ENCODE measurements at regions of chr5 and their contacts with region 1.

Region 1: DNA sequence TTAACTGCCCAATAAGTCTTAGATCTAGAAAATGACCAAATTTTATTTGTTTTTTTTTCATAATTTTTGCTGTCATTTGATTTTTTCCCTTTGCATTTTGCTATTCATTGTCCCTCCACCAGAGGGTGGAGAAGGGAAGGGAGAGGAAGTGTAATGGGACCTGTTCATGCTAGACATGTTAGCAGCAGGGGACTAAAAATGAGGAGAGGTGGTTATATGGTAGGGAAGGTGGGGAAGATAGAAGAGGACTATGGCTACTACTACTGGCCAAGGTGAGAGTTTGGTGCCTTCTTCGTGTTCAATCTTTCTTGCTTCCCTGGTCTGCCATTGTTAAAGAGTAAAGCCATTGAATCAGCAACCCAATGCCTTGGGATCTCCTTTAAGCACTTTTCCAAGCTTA is 6.4 kb downstream of the GRIA1 start:
- DNase-seq: no peak

Region 2: GRCh38 chr5:152838241-152838786 is 658.5 kb before region 1 on chr5:
- intact Hi-C with region 1: no loop called
- DNase-seq: no peak

Region 3: GRCh38 chr5:153372425-153373129 is 124.3 kb before region 1 on chr5:
- intact Hi-C with region 1: no loop called
- DNase-seq: no peak

Region 4: GRCh38 chr5:153672347-153673090 is 175.7 kb after region 1 on chr5:
- intact Hi-C with region 1: no loop called
- DNase-seq: no peak

Region 5: GRCh38 chr5:153711755-153712154 is 214.9 kb after region 1 on chr5:
- intact Hi-C with region 1: loop called (anchors 5 kb)
- DNase-seq: no peak

Region 6: GRCh38 chr5:153964880-153965645 is 468.2 kb after region 1 on chr5:
- intact Hi-C with region 1: loop called (anchors 1 kb)
- DNase-seq: no peak